A673 (cell line): ENCODE measurements at regions of chr11 and their contacts with region 1.

Region 1: GRCh38 chr11:75328426-75329277 is 22.8 kb downstream of the ARRB1 start:
- DNase-seq: peak; percentile 85
- H3K4me3 ChIP-seq: no peak overlapping the region
- H3K27ac ChIP-seq: peak overlapping the region; percentile 14
- H3K4me1 ChIP-seq: peaks cover 31% of the 10 kb centered on the region
- H3K27me3 ChIP-seq: no peaks in the 10 kb centered on the region
- CTCF ChIP-seq: peak; percentile 77

Region 2: DNA sequence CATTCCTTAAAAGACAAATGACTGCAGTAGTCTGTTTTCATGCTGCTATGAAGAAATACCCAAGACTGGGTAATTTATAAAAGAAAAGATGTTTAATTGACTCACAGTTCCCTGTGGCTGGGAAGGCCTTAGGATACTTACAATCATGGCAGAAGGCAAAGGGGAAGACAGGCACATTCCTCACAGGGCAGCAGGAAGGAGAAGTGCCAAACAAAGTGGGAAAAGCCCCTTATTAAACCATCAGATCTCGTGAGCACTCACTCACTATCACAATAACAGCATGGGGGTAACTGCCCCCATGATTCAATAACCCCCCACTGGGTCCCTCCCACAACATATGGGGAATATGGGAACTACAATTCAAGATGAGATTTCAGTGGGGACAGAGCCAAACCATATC is 215.6 kb before region 1 on chr11:
- CTCF ChIA-PET with region 1: no interaction called
- POLR2A ChIA-PET with region 1: no interaction called
- intact Hi-C with region 1: no loop called
- DNase-seq: no peak
- H3K4me3 ChIP-seq: no peak overlapping the region
- H3K27ac ChIP-seq: no peak overlapping the region
- H3K4me1 ChIP-seq: no peaks in the 10 kb centered on the region
- H3K27me3 ChIP-seq: no peaks in the 10 kb centered on the region
- CTCF ChIP-seq: no peak

Region 3: DNA sequence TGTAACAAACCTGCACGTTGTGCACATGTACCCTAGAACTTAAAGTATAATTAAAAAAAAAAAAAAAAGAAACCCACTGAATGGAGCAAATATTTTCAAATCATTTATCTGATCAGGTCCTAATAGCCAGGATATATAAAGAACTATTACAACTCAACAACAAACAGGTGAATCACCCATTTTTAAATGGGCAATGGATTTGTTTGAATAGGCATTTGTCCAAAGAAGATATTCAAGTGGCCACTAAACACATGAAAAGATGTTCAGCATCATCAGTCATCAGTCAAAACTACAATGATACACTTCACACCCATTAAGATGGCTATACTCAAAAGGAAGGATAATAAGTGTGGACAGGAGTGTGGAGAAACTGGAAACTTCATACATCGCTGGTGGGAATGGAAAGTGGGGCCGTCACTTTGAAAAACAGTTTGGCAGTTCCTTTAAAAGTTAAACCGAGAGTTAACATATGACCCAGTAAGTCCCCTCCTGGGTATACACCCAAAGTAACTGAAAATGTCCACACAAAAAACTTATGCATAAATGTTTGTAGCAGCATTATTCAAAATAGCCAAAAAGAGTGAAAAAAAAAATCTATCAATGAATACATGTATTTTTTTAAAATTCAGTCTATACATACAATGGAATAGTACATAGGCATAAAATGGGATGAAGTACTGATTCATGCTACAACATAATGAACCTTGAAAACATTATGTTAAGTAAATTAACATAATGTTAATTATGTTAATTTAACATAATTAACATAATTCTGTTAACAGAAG is 30.3 kb before region 1 on chr11:
- CTCF ChIA-PET with region 1: no interaction called
- POLR2A ChIA-PET with region 1: interaction called, 14 read pairs
- intact Hi-C with region 1: no loop called
- DNase-seq: no peak
- H3K4me3 ChIP-seq: no peak overlapping the region
- H3K27ac ChIP-seq: no peak overlapping the region
- H3K4me1 ChIP-seq: no peaks in the 10 kb centered on the region
- H3K27me3 ChIP-seq: no peaks in the 10 kb centered on the region
- CTCF ChIP-seq: no peak

Region 4: GRCh38 chr11:75380711-75381420 is 52.2 kb after region 1 on chr11:
- CTCF ChIA-PET with region 1: no interaction called
- POLR2A ChIA-PET with region 1: no interaction called
- intact Hi-C with region 1: loop called (anchors 1 kb)
- DNase-seq: no peak
- H3K4me3 ChIP-seq: no peak overlapping the region
- H3K27ac ChIP-seq: no peak overlapping the region
- H3K4me1 ChIP-seq: no peaks in the 10 kb centered on the region
- H3K27me3 ChIP-seq: no peaks in the 10 kb centered on the region
- CTCF ChIP-seq: no peak

Region 5: GRCh38 chr11:75388386-75389275 is 60.0 kb after region 1 on chr11:
- CTCF ChIA-PET with region 1: interaction called, 5 read pairs
- POLR2A ChIA-PET with region 1: no interaction called
- intact Hi-C with region 1: loop called (anchors 1 kb)
- DNase-seq: peak; percentile 92
- H3K4me3 ChIP-seq: no peak overlapping the region
- H3K27ac ChIP-seq: no peak overlapping the region
- H3K4me1 ChIP-seq: no peaks in the 10 kb centered on the region
- H3K27me3 ChIP-seq: no peaks in the 10 kb centered on the region
- CTCF ChIP-seq: peak; percentile 95